Left colon (tissue), 2 donors: ENCODE measurements at regions of chr14 and their contacts with region 1.

Region 1: DNA sequence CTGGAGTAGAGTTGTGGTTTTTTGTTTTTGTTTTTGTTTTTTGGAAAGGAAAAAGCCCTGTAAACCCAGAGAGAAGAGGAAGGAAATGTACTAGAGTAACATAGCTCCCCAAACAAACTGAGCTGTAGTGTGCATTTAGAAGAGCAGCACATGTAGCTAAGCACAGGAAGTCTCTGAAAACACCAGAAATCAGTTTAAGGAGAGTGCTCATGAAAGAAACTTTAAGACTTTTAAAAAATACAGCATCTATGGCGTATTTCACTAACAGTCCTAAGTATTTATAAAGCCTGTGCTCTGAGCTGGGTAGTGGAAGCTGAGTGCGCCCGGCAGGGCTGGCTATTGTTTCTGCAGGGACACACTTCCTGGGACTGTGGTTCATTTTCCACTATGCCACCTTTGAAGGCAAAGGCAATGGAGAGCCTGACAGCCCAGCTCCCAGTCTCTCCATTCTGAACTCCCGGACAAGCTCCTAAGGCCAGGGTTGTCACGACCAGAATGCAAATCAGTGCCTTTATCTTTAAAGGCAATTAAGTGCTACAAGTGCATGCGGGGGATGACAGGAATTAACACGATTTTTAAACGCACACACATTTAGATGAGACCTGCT is 45.4 kb downstream of the NIN start:
- DNase-seq: no peak
- ATAC-seq: no peak

Region 2: DNA sequence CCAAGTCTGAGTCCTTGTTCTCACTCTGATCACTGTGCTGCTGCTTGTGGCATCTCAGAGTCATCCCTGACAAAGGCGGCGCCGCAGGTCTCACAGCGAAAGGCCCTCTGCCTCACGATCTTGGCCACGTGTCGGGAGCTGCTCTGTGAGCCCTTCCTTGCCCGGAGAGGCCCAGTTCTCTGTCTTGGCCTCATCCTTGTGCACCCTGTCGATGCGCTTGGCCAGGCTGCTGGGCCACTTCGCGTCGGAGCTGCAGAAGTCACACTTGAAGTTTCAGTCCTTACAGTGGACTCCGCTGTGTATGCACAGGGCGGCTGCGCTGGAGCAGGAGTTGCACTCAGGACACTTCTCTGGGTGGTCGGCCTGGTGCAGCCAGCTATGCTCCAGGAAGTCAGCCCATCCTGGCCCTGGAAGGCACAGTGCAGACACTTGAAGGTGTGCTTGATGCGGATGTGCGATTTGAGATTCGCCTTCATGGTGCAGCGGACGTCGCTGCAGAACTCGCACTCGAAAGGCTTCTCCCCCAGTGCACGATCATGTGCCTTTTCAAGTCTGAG is 81.0 kb before region 1 on chr14:
- intact Hi-C with region 1: no loop called
- DNase-seq: no peak
- ATAC-seq: no peak

Region 3: DNA sequence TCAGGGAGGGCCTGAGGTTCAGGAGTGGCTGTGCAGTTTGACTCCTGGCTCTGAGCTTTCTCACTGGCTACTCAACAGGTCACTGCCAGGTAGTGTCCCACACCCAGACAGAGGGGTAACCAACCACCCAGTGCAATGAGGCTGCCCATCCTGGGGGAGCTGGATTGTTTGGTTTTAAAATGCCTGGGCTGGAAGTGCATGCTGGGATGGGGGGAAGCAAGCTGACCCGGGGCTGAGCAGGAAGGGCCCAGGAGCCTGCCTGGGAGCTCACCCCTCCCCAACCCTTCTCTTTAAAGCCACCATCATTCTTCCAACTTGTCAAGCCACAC is 73.7 kb after region 1 on chr14:
- intact Hi-C with region 1: loop called in 1 of 2 experiments (anchors 10 kb)
- DNase-seq: no peak
- ATAC-seq: no peak

Region 4: DNA sequence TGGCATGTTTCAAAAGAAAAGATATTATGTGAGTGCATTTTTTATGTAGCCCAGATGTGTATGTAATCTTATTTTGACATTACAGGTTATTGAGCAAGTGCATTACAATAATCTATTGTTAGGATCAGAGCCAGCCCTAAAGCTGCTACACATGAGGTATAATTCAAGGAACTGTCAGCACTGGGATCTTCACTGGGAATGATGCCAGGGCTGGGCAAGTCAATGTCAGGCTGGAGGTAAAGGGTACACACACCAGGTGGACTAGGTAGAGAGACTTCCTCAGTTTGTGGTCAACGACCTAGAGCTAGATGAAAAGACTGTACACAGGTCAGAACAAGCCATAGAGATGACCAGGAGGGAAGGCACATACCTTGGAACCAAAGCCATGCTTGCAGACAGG is 293.9 kb after region 1 on chr14:
- intact Hi-C with region 1: no loop called
- DNase-seq: peak in 1 of 2 donors; percentile 42
- ATAC-seq: peak; percentile 66